IMR-90 (cell line): ENCODE measurements at regions of chr5 and their contacts with region 1.

Region 1: GRCh38 chr5:139765409-139766217 is 30.0 kb upstream of the PSD2 start:
- DNase-seq: peak; percentile 57
- ATAC-seq: peak; percentile 94
- H3K4me3 ChIP-seq: peak overlapping the region; percentile 59
- H3K27ac ChIP-seq: no peak overlapping the region; the same call in 1 of the 2 replicates
- H3K4me1 ChIP-seq: no peaks in the 10 kb centered on the region
- H3K27me3 ChIP-seq: peaks cover 31% of the 10 kb centered on the region
- CTCF ChIP-seq: peak; percentile 61
- POLR2A ChIP-seq: no peak
- RAD21 ChIP-seq: peak; percentile 78

Region 2: DNA sequence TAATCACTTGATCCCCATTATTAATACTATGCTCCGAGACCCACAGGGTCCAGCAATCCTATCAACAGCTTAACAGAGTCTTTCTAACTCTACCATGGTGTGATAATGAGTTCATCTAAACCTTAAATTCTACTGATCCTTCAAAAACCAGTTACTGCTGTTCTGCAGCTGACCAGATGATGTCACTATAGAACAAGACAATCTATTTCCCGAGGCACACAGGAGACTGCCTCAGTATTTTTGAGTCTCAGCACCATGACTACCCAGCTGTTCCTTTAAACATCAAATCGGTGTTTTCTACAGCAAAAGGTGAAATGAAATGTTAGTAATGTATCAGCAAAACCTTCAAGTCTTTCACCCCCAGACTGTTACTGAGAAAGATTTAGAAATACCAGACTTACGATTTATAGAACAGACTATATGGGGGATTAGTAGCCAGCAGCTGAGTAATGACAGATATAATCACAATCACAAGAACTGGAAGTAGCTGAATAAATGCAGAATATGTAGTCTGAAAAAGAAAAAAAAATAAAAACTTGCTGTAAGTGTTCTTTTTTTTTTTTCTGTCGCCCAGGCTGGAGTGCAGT is 343.2 kb before region 1 on chr5:
- CTCF ChIA-PET with region 1: no interaction called
- POLR2A ChIA-PET with region 1: no interaction called
- dilution Hi-C with region 1: no loop called
- in situ Hi-C with region 1: loop called (anchors 10 kb)
- intact Hi-C with region 1: loop called (anchors 5 kb)
- DNase-seq: peak; percentile 78
- ATAC-seq: peak; percentile 96
- H3K4me3 ChIP-seq: no peak overlapping the region
- H3K27ac ChIP-seq: no peak overlapping the region
- H3K4me1 ChIP-seq: peaks cover 7% of the 10 kb centered on the region; the same call in 1 of the 2 replicates
- H3K27me3 ChIP-seq: no peaks in the 10 kb centered on the region
- CTCF ChIP-seq: peak; percentile 94
- POLR2A ChIP-seq: 0 out of 2 replicates have a peak, but pooled peaks have one; percentile 34
- RAD21 ChIP-seq: peak; percentile 97

Region 3: GRCh38 chr5:139651853-139652787 is 113.5 kb before region 1 on chr5:
- CTCF ChIA-PET with region 1: interaction called, 7 read pairs
- POLR2A ChIA-PET with region 1: interaction called, 3 read pairs
- dilution Hi-C with region 1: loop called (anchors 25 kb)
- in situ Hi-C with region 1: no loop called
- intact Hi-C with region 1: loop called (anchors 1 kb)
- DNase-seq: peak; percentile 94
- ATAC-seq: peak; percentile 40
- H3K4me3 ChIP-seq: peak overlapping the region; percentile 17; the same call in 1 of the 2 replicates
- H3K27ac ChIP-seq: peak overlapping the region; percentile 86
- H3K4me1 ChIP-seq: peaks cover 46% of the 10 kb centered on the region
- H3K27me3 ChIP-seq: no peaks in the 10 kb centered on the region
- CTCF ChIP-seq: no peak
- POLR2A ChIP-seq: no peak
- RAD21 ChIP-seq: no peak; the same call in 1 of the 2 replicates

Region 4: DNA sequence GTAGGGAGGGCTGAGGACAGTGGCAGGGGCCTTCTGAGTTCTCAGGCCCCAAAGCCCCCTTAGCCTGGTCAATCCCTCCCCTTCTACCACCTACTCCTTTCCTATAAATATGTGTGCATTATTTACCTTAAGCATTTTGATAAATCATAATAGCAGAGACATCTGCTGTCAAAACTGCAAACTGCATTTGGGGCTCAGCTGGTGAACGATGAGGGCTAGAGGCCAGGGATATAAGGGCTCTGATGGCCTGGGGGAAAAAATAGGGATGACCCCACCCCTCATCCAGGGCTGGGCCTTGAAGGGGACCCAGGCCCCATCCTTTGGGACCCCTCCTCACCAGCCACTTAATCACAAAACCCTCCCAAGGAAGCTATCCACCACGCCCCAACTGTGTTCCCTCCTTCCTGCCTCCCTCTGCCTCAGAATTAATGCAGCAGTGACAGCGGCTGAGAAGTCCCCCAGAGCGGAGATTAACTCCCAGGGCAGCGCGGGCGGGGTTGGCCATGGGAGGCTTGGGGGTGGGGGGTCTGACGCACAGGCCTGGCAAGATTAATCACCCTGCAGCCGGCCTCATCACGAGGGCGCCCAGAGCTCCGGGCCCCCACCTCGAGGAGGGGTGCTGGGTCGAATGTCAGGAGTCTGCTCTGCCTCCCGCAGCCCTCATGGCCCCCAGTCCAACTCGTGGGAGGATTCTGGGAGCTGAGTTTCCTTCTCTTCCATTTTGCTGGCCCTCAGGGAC is 75.4 kb before region 1 on chr5:
- CTCF ChIA-PET with region 1: interaction called, 6 read pairs
- POLR2A ChIA-PET with region 1: no interaction called
- dilution Hi-C with region 1: no loop called
- in situ Hi-C with region 1: no loop called
- intact Hi-C with region 1: loop called (anchors 5 kb)
- DNase-seq: peak; percentile 61
- ATAC-seq: peak; percentile 56
- H3K4me3 ChIP-seq: no peak overlapping the region
- H3K27ac ChIP-seq: peak overlapping the region; percentile 26; the same call in 1 of the 2 replicates
- H3K4me1 ChIP-seq: peaks cover 35% of the 10 kb centered on the region
- H3K27me3 ChIP-seq: no peaks in the 10 kb centered on the region
- CTCF ChIP-seq: peak; percentile 58
- POLR2A ChIP-seq: no peak
- RAD21 ChIP-seq: peak; percentile 54